PC-9 (cell line): ENCODE measurements at regions of chr16 and their contacts with region 1.

Region 1: GRCh38 chr16:543301-544164 is 16.0 kb downstream of the CAPN15 start:
- DNase-seq: no peak
- H3K4me3 ChIP-seq: no peak overlapping the region
- H3K27ac ChIP-seq: no peak overlapping the region
- H3K4me1 ChIP-seq: no peaks in the 10 kb centered on the region
- H3K27me3 ChIP-seq: no peaks in the 10 kb centered on the region
- CTCF ChIP-seq: no peak

Region 2: DNA sequence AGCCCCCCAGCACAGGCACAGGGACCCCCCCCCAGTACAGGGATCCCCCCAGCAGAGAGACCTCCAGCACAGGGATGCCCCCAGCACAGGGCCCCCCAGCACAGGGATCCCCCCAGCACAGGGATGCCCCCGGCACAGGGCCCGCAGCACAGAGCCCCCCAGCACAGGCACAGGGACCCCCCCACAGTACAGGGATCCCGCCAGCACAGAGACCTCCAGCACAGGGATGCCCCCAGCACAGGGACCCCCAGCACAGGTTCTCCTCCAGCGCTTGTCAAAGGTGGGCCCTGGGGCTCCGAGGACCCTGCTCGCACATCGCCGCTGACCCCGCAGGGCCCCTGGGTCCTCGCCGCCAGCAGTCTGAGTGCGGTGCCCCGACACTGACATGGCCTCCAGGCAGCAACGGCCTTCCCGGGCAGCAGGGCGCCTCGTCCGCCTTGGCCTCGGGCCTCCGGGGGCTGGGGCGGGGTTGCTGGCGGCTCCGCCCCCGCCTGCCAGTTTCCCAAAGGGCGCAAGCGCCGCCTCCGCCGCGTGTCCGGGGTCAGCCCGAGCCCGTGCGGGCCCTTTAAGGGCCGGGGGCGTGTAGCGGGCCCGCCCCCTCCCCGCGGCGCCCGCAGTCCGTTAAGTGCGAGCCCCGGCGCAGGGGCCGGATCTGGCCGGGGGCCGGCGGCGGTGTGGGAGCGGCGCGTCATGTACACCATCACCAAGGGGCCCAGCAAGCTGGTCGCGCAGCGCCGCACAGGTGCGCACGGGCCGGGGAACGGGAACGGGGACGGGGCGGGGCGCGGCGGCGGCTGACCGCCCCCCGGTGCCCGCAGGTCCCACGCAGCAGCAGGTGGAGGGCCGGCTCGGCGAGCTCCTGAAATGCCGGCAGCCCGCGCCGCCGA is 98.0 kb after region 1 on chr16 and contains the start of gene MCRIP2:
- CTCF ChIA-PET with region 1: no interaction called
- POLR2A ChIA-PET with region 1: interaction called, 26 read pairs
- intact Hi-C with region 1: no loop called
- DNase-seq: peak; percentile 46 to 95
- H3K4me3 ChIP-seq: peak within 1 kb of the TSS; percentile 69
- H3K27ac ChIP-seq: peak within 1 kb of the TSS; percentile 23; the same call in 1 of the 2 replicates
- H3K4me1 ChIP-seq: peaks cover 39% of the 10 kb centered on the region
- H3K27me3 ChIP-seq: no peaks in the 10 kb centered on the region
- CTCF ChIP-seq: no peak
- total RNA-seq, gene MCRIP2: 64.2 and 69.6 TPM in 2 replicates